ENCODE measurements at regions of chr12 and their contacts with region 1.

Region 1: DNA sequence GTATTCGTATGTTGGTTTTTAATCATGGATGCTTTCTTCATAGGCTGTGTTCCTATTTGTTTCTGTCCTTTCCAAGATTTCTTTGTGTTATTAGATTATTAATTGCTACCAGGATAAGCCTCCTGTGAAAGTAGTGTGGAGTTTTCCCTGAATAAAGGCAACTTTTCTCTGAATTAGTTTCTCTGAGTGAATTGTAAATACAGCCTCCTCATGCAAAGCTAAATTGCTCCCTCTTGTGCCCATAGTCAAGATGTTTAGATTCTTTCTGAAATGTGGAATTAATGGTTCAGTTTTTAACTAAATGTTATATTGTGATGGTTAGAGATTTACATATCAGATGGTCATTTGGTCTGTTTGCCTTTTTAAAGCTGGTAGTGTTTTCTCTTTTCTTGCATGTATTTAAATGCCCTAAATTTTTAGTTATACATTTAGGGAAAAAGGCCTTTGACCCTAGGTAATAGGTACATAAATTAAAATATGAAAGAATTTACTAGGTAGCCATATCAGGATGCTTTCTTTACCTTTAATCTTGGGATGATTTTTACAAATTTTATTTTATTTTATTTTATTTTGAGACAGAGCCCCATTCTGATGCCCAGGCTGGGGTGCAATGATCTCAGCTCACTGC is 8.9 kb downstream of the APAF1 start:
- DNase-seq: no peak

Region 2: DNA sequence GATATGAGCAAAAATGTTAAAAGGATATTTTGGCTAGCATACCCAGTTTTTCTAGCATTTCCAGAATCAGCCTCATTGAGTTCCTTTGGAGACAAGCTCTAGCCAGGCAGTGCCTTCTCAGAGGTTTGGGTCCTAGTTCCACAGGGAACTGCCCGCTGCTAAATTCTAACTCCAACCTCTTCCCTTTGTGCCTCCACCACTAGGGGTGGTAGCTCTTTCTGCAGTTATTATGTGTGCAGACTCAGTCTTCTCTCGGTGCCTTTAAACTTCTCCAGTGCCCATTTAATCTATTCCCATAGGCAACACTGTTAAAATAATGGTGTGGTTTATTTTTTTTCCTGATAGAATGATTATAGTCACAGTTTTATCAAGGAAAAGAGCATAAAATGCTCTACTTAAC is 82.0 kb before region 1 on chr12:
- intact Hi-C with region 1: loop called (anchors 5 kb)
- DNase-seq: no peak

Region 3: DNA sequence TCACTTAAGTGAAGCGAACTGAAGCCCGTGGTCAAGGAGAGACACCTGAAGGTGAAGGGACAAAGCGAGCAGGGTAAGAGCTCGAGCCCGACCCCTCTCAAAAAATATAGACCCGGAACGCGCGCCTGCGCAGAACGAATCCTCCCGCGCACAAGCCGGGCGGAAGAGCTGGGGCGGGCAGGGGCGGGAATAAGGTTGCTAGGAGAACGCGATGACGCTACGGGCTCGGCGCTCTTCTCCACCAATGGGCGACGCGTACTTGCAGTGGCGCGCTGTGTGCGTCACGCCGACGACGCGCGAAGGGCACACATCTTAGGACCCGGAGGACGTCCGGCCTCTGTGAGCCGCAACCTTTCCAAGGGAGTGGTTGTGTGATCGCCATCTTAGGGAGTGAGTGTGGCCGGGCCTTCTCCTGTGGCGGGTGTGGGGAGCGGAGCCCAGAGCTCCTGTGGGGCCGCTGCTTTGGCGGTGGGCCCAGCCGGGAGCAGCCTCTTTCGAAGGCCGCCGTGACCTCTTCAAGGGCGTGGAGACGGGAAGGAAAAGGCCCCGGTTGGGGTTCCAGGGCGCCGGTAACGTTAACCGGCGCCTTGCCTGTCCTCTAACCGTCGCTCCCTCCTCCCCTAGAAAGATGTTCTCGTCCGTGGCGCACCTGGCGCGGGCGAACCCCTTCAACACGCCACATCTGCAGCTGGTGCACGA is 60.5 kb before region 1 on chr12 and contains the start of gene SLC25A3:
- intact Hi-C with region 1: no loop called
- DNase-seq: peak; percentile 98
- total RNA-seq, gene SLC25A3: 1,075 TPM

Measured in cardiac septum (tissue), 1 donor.